PC-3 (cell line): ENCODE measurements at regions of chr19 and their contacts with region 1.

Region 1: DNA sequence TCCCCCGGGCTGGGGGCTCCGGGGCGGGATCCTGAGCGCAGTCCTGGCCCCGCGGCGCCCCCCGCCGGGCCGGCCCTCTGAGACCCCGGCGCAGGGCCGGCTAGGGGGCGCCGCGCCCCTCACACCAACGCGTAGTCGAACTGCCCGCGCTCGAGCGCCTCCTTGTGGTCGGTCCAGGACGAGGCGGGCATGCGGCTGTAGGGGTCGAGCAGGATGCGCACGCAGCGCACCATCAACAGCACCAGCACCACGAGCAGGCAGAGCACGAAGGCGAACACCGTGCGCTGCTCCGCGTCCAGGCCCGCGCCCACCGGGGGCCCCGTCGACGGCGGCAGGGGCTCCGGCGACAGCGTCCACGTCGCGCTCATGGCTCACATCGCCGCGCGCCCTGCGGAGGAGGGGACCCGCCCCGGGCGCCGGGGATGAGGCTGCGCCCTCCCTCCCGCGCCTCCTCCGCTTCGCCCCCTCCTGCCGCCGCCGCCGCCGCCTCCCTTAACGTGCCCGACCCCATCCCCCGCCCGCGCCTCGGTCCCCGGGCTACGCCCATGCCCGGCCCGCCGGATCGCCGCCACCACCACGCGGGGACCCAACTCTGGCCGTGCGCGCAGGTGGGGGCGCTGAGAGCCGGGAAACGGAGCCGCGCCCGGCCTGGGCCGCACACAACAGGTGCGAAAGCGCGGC is 624 bp downstream of the CTXN1 start:
- DNase-seq: peak; percentile 84
- ATAC-seq: peak; percentile 26
- H3K4me3 ChIP-seq: peak overlapping the region; percentile 55
- H3K27ac ChIP-seq: no peak overlapping the region
- H3K4me1 ChIP-seq: peaks cover 48% of the 10 kb centered on the region
- H3K27me3 ChIP-seq: no peaks in the 10 kb centered on the region
- CTCF ChIP-seq: peak; percentile 93

Region 2: DNA sequence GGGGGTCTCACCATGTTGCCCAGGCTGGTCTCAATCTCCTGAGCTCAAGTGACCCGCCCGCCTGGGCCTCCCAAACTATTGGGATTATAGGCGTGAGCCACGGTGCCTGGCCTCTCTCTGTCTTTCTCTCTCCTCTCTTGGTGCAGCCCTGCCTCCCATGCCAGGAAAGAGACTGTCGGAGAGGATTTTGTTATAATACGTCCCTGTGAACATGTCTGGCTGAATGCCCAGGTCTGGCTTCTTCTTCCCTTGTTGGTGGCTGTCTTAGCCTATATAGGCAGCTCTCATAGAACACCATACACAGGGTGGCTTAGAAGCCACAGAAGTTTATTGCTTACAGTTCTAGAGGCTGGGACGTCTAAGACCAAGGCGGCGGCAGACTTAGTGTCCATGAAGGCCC is 482.9 kb before region 1 on chr19:
- CTCF ChIA-PET with region 1: no interaction called
- POLR2A ChIA-PET with region 1: interaction called, 34 read pairs
- intact Hi-C with region 1: no loop called
- DNase-seq: no peak
- ATAC-seq: no peak
- H3K4me3 ChIP-seq: no peak overlapping the region
- H3K27ac ChIP-seq: no peak overlapping the region
- H3K4me1 ChIP-seq: no peaks in the 10 kb centered on the region
- H3K27me3 ChIP-seq: no peaks in the 10 kb centered on the region
- CTCF ChIP-seq: no peak

Region 3: DNA sequence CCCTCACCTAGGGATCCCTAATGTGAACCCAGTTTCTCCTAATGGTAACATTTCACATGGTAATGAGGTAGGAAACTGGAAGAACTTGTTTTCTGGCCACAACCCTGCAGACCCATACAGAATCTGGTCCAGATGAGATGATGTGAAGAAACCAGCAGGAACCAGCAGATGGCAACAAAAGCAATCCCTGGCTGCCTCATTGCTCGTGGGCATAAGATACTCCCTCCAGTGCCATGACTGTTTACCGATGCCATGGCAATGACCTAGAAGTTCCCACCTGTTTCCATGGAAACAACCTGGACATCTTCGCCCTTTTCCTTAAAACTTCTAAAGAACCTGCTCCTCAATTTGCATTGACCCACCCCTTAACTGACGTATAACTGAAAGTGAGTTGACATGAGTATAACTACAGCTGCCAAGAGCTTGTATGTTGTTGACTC is 176.5 kb before region 1 on chr19:
- CTCF ChIA-PET with region 1: no interaction called
- POLR2A ChIA-PET with region 1: no interaction called
- intact Hi-C with region 1: no loop called
- DNase-seq: peak; percentile 82
- ATAC-seq: peak; percentile 86
- H3K4me3 ChIP-seq: no peak overlapping the region
- H3K27ac ChIP-seq: no peak overlapping the region
- H3K4me1 ChIP-seq: no peaks in the 10 kb centered on the region
- H3K27me3 ChIP-seq: peaks cover 11% of the 10 kb centered on the region
- CTCF ChIP-seq: peak; percentile 77

Region 4: GRCh38 chr19:7852851-7853769 is 72.2 kb before region 1 on chr19:
- CTCF ChIA-PET with region 1: interaction called, 3 read pairs
- POLR2A ChIA-PET with region 1: no interaction called
- intact Hi-C with region 1: loop called (anchors 5 kb)
- DNase-seq: peak; percentile 86
- ATAC-seq: peak; percentile 94
- H3K4me3 ChIP-seq: no peak overlapping the region
- H3K27ac ChIP-seq: no peak overlapping the region
- H3K4me1 ChIP-seq: peaks cover 4% of the 10 kb centered on the region
- H3K27me3 ChIP-seq: no peaks in the 10 kb centered on the region
- CTCF ChIP-seq: peak; percentile 94

Region 5: GRCh38 chr19:7943444-7944176 is 18.3 kb after region 1 on chr19 and contains the start of gene TIMM44:
- CTCF ChIA-PET with region 1: interaction called, 20 read pairs
- POLR2A ChIA-PET with region 1: interaction called, 47 read pairs
- intact Hi-C with region 1: loop called (anchors 1 kb)
- DNase-seq: peak; percentile 100
- ATAC-seq: peak; percentile 98
- H3K4me3 ChIP-seq: peak within 1 kb of the TSS; percentile 91
- H3K27ac ChIP-seq: peak within 1 kb of the TSS; percentile 75
- H3K4me1 ChIP-seq: peaks cover 14% of the 10 kb centered on the region
- H3K27me3 ChIP-seq: no peaks in the 10 kb centered on the region
- CTCF ChIP-seq: no peak
- total RNA-seq, gene TIMM44: 191 and 262 TPM in 2 replicates

Region 6: DNA sequence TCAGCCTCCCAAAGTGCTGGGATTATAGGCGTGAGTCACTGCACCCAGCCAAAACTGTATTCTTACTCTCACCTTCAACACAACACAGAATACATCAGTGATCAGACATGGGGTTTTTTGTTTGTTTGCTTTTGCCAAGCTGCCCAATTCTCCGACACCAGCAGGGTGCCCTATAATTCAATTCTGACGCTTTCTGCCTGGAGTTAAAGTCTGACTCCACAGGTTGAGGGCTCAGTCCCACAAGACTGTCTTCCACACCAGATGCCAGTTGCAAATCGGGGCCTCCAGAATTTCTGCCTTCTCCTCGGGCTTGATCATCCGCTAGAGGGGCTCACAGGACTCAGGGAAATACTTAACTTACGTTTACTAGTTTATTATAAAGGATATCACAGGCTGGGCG is 202.0 kb after region 1 on chr19:
- CTCF ChIA-PET with region 1: no interaction called
- POLR2A ChIA-PET with region 1: interaction called, 30 read pairs
- intact Hi-C with region 1: no loop called
- DNase-seq: no peak
- ATAC-seq: no peak
- H3K4me3 ChIP-seq: no peak overlapping the region
- H3K27ac ChIP-seq: no peak overlapping the region
- H3K4me1 ChIP-seq: no peaks in the 10 kb centered on the region
- H3K27me3 ChIP-seq: peaks cover 35% of the 10 kb centered on the region
- CTCF ChIP-seq: no peak